AG04449 (cell line): ENCODE measurements at regions of chr22 and their contacts with region 1.

Region 1: DNA sequence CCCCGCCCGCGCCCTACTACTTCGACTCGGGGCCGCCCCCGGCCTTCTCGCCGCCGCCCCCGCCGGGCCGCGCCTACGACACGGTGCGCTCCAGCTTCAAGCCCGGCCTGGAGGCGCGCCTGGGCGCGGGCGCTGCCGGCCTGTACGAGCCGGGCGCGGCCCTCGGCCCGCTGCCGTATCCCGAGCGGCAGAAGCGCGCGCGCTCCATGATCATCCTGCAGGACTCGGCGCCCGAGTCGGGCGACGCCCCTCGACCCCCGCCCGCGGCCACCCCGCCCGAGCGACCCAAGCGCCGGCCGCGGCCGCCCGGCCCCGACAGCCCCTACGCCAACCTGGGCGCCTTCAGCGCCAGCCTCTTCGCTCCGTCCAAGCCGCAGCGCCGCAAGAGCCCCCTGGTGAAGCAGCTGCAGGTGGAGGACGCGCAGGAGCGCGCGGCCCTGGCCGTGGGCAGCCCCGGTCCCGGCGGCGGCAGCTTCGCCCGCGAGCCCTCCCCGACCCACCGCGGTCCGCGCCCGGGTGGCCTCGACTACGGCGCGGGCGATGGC is 17.6 kb upstream of the ACR start:
- DNase-seq: no peak
- H3K4me3 ChIP-seq: no peak overlapping the region
- CTCF ChIP-seq: no peak

Region 2: GRCh38 chr22:50595189-50595588 is 125.2 kb before region 1 on chr22:
- CTCF ChIA-PET with region 1: no interaction called
- POLR2A ChIA-PET with region 1: no interaction called
- DNase-seq: no peak
- H3K4me3 ChIP-seq: no peak overlapping the region
- CTCF ChIP-seq: no peak

Region 3: GRCh38 chr22:50731811-50732624 is 11.6 kb after region 1 on chr22:
- CTCF ChIA-PET with region 1: interaction called, 45 read pairs
- POLR2A ChIA-PET with region 1: no interaction called
- DNase-seq: no peak
- H3K4me3 ChIP-seq: no peak overlapping the region
- CTCF ChIP-seq: peak; percentile 88